ENCODE measurements at regions of chr6 and their contacts with region 1.

Region 1: DNA sequence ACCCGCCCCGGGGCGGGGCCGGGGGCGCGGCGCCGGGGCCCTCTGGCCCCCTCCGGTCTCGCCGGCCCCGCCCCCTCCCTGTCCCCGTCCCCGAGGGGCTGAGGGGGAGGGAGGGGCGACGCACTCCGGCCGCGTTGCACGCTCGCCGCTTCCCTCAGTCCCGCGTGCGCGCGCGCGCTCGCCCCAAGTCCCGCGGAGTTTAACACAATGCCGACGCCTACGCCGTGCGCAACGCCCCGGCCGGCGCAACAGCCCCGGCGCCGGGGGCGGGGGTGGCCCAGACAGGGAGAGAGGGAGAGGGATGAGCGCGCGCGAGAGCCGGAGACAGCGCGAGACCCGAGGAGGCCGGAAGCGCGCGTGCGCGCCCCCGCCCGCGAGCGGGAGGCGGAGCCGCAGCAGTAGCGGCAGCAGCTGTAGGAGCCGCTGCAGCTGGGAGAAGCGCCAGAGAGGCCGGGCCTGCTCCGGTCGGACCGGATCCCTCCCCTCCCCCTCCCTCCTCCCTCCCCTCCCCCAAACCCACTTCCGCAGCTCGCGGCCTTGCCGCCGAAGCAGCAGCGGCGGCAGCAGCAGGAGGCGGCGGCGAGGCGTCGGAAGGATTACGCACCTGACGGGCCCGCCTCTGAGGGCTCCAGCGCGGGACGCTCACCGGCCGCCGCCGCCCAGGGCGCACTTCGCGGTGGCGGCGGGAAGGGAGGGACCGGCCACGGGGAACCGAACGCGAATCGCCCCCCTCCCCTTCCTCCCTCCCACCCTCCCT is 905 bp downstream of the ZBTB2 start:
- DNase-seq: peak; percentile 99
- H3K4me3 Mint-ChIP-seq: peak overlapping the region; percentile 98
- H3K27ac Mint-ChIP-seq: peak overlapping the region; percentile 72
- H3K4me1 Mint-ChIP-seq: peaks cover 63% of the 10 kb centered on the region
- H3K27me3 Mint-ChIP-seq: no peaks in the 10 kb centered on the region

Region 2: DNA sequence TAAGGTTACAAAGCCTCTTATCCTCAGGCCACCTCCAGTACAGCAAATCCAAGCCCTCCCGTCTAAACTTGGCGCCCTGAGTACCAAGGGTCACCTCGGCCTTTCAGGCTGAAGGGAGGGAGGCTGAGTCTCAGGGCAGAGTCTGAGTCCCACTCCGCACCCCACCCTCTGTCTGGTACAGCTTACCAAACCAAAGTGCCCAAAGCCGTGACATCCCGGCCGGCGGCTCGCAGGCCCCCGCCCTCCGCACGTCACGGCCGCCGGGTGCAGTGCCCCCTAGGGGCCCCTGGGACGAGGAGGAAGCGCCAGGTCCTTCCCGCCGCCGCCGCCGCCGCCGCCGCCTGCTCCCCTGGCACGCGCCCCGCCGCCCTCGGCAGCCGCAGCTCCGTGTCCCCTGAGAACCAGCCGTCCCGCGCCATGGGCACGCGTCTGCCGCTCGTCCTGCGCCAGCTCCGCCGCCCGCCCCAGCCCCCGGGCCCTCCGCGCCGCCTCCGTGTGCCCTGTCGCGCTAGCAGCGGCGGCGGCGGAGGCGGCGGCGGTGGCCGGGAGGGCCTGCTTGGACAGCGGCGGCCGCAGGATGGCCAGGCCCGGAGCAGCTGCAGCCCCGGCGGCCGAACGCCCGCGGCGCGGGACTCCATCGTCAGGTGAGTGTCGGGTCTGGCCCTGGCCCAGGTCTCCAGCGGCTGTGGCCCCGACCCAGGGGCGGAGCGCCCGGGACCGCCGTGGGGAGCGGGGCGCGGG is 524.9 kb before region 1 on chr6 and contains the start of gene MTHFD1L:
- CTCF ChIA-PET with region 1: no interaction called
- POLR2A ChIA-PET with region 1: no interaction called
- intact Hi-C with region 1: loop called (anchors 1 kb)
- DNase-seq: peak; percentile 84
- H3K4me3 Mint-ChIP-seq: peak within 1 kb of the TSS; percentile 92
- H3K27ac Mint-ChIP-seq: peak within 1 kb of the TSS; percentile 91
- H3K4me1 Mint-ChIP-seq: peaks cover 22% of the 10 kb centered on the region
- H3K27me3 Mint-ChIP-seq: peaks cover 13% of the 10 kb centered on the region
- total RNA-seq, gene MTHFD1L: 115 to 119 TPM

Region 3: GRCh38 chr6:151370509-151371078 is 19.9 kb before region 1 on chr6:
- CTCF ChIA-PET with region 1: interaction called, 4 read pairs
- POLR2A ChIA-PET with region 1: interaction called, 12 read pairs
- intact Hi-C with region 1: loop called (anchors 1 kb)
- DNase-seq: no peak
- H3K4me3 Mint-ChIP-seq: no peak overlapping the region
- H3K27ac Mint-ChIP-seq: no peak overlapping the region
- H3K4me1 Mint-ChIP-seq: peaks cover 37% of the 10 kb centered on the region
- H3K27me3 Mint-ChIP-seq: no peaks in the 10 kb centered on the region

Region 4: GRCh38 chr6:151379933-151380847 is 10.3 kb before region 1 on chr6:
- CTCF ChIA-PET with region 1: interaction called, 3 read pairs
- POLR2A ChIA-PET with region 1: interaction called, 13 read pairs
- intact Hi-C with region 1: loop called (anchors 1 kb)
- DNase-seq: peak; percentile 42
- H3K4me3 Mint-ChIP-seq: peak overlapping the region; percentile 83
- H3K27ac Mint-ChIP-seq: peak overlapping the region; percentile 98
- H3K4me1 Mint-ChIP-seq: peaks cover 62% of the 10 kb centered on the region
- H3K27me3 Mint-ChIP-seq: no peaks in the 10 kb centered on the region

Region 5: DNA sequence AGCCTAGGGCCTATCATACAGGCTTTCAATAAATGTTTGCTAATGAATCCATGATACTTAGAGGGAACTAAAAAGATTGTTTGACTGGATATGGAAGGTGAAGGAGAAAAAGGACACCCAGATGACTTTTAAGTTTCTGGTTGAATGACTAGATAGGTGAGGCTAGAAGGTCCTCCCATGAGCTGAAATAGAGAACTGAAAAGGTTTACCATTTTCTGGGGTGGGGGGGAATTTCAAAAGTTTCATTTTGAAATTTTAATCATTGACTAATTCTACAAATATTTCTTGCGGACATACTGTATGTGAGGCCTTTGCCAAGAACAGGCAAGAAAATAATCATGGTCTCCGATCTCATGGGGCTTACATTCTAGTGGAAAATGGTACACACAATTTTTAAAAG is 18.8 kb after region 1 on chr6:
- CTCF ChIA-PET with region 1: interaction called, 41 read pairs
- POLR2A ChIA-PET with region 1: no interaction called
- intact Hi-C with region 1: no loop called
- DNase-seq: no peak
- H3K4me3 Mint-ChIP-seq: no peak overlapping the region
- H3K27ac Mint-ChIP-seq: no peak overlapping the region
- H3K4me1 Mint-ChIP-seq: peaks cover 12% of the 10 kb centered on the region
- H3K27me3 Mint-ChIP-seq: no peaks in the 10 kb centered on the region